ENCODE measurements at regions of chr11 and their contacts with region 1.

Region 1: DNA sequence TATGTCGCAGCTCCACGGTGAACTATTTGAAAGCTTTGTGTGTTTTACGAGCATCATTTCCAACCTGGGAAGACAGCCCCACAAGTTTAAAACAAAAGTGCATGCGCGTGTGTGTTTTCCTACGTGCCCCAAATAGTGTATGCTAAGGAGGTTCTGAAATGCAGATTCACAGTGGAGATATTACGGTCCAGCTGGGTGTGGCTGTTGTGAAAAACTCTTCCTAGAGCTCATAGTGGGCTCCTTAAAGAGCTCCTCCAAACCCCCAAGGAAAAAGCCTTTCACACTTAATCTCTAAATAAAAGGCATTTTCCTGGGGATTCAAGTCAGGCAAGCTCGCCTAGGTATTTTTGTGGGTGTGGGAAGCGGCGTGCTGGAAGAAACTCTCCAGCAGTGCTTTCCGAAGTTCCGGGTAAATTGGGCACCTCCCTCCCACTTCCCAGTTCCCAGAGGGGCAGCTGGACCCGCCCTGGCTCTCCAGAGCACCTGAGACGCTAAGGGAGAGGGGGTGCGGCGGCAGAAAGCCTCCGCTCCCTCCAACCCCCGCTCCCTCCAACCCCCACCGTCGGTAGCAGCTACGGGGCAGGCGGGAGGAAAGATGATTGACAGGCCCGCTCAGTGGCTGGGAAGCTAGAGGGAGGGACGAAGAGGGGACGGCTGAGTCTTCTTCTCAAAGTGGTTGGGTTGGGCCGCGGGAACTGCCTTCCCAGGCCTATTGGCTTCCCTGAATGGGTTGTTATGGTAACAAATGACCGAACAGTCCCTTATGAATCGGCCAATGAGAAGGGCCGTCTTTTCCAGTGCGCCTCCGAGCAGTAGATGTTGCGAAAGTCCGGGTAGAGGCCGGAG is 558 bp upstream of the PCF11 start:
- DNase-seq: peak; percentile 94 to 100 (median 97)
- ATAC-seq: peak; percentile 83
- H3K4me3 ChIP-seq: peak overlapping the region; percentile 89 to 98
- H3K4me3 Mint-ChIP-seq: peak overlapping the region; percentile 100
- H3K27ac ChIP-seq: peak overlapping the region; percentile 97
- H3K27ac Mint-ChIP-seq: peak overlapping the region; percentile 100
- H3K4me1 ChIP-seq: peaks cover 13% of the 10 kb centered on the region
- H3K4me1 Mint-ChIP-seq: peaks cover 28% of the 10 kb centered on the region
- H3K27me3 ChIP-seq: no peaks in the 10 kb centered on the region
- H3K27me3 Mint-ChIP-seq: no peaks in the 10 kb centered on the region
- CTCF ChIP-seq: no peak

Region 2: GRCh38 chr11:82663535-82663934 is 492.8 kb before region 1 on chr11:
- CTCF ChIA-PET with region 1: no interaction called
- POLR2A ChIA-PET with region 1: no interaction called
- intact Hi-C with region 1: no loop called
- DNase-seq: no peak
- ATAC-seq: no peak
- H3K4me3 ChIP-seq: no peak overlapping the region
- H3K4me3 Mint-ChIP-seq: no peak overlapping the region
- H3K27ac ChIP-seq: no peak overlapping the region
- H3K27ac Mint-ChIP-seq: no peak overlapping the region
- H3K4me1 ChIP-seq: no peaks in the 10 kb centered on the region
- H3K4me1 Mint-ChIP-seq: no peaks in the 10 kb centered on the region
- H3K27me3 ChIP-seq: no peaks in the 10 kb centered on the region
- H3K27me3 Mint-ChIP-seq: peaks cover under 1% of the 10 kb centered on the region
- CTCF ChIP-seq: no peak

Region 3: GRCh38 chr11:82959987-82960778 is 196.2 kb before region 1 on chr11:
- CTCF ChIA-PET with region 1: interaction called, 5 read pairs
- POLR2A ChIA-PET with region 1: interaction called, 24 read pairs
- intact Hi-C with region 1: loop called (anchors 1 kb)
- DNase-seq: peak in 7 of 9 experiments; percentile 25 to 89 (median 42)
- ATAC-seq: peak; percentile 78
- H3K4me3 ChIP-seq: peak overlapping the region; percentile 23 to 38
- H3K4me3 Mint-ChIP-seq: peak overlapping the region; percentile 55
- H3K27ac ChIP-seq: peak overlapping the region; percentile 79 to 89
- H3K27ac Mint-ChIP-seq: peak overlapping the region; percentile 98
- H3K4me1 ChIP-seq: peaks cover 92% of the 10 kb centered on the region
- H3K4me1 Mint-ChIP-seq: peaks cover 87% of the 10 kb centered on the region
- H3K27me3 ChIP-seq: no peaks in the 10 kb centered on the region
- H3K27me3 Mint-ChIP-seq: no peaks in the 10 kb centered on the region
- CTCF ChIP-seq: no peak

Region 4: DNA sequence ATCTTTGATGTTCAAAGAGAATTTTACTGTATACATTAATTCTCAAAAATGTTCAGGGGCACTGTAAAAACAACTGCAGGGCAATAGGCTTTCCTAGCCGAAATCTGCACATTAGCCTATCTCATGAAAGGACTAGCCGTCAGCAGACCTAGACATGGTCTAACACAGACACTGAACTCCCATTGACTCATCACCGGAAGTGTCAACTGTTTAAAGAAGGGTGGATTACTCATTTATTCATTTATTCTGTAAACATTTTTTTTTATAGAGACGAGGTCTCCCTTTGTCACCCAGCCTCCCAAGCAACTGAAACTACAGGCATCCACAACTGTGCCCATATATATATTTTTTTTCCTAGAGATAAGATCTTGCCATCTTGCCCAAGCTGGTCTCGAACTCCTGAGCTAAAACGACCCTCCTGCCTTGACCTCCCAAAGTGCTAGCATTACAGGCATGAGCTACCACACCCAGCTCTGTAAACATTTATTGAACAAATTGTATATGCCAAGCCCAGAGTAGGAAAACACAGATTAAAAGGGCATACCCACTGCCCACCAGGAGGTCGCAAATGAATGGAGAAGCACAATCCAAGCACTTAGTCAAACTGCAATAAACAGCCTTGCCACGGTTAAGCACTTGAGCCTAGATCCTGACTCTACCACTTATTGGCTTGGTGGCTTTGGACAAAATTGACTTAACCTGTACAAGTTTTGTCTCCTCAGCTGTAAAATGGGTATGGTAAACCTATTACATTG is 111.2 kb before region 1 on chr11:
- CTCF ChIA-PET with region 1: no interaction called
- POLR2A ChIA-PET with region 1: no interaction called
- intact Hi-C with region 1: no loop called
- DNase-seq: peak in 3 of 9 experiments; percentile 26 to 59 (median 57)
- ATAC-seq: peak; percentile 87
- H3K4me3 ChIP-seq: no peak overlapping the region
- H3K4me3 Mint-ChIP-seq: no peak overlapping the region
- H3K27ac ChIP-seq: no peak overlapping the region
- H3K27ac Mint-ChIP-seq: peak overlapping the region; percentile 70
- H3K4me1 ChIP-seq: peaks cover 3% of the 10 kb centered on the region
- H3K4me1 Mint-ChIP-seq: peaks cover 55% of the 10 kb centered on the region
- H3K27me3 ChIP-seq: no peaks in the 10 kb centered on the region
- H3K27me3 Mint-ChIP-seq: no peaks in the 10 kb centered on the region
- CTCF ChIP-seq: no peak

Region 5: DNA sequence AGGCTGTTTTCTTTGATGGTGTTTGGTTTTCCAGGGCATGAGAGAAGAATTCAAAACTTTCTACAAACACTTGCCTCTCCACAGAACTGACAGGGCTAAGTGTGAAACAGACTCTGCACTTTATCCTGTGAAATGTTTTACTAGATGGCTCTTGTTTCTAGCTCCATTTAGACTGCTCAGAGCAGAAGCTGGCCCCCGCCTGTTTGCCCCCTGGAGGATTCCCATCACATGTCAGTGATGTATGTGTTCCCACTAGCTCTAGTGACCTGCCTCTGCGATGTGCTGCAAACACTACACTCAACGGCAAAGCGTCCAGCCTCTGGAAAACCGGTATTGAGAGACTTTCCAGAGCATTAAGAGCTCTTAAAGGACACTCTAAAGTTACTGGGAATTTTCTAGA is 40.8 kb before region 1 on chr11:
- CTCF ChIA-PET with region 1: interaction called, 3 read pairs
- POLR2A ChIA-PET with region 1: interaction called, 47 read pairs
- intact Hi-C with region 1: loop called (anchors 1 kb)
- DNase-seq: no peak
- ATAC-seq: no peak
- H3K4me3 ChIP-seq: peak overlapping the region in 1 of 2 experiments; percentile 15
- H3K4me3 Mint-ChIP-seq: peak overlapping the region; percentile 74
- H3K27ac ChIP-seq: no peak overlapping the region
- H3K27ac Mint-ChIP-seq: no peak overlapping the region
- H3K4me1 ChIP-seq: peaks cover 44% of the 10 kb centered on the region
- H3K4me1 Mint-ChIP-seq: peaks cover 55% of the 10 kb centered on the region
- H3K27me3 ChIP-seq: no peaks in the 10 kb centered on the region
- H3K27me3 Mint-ChIP-seq: no peaks in the 10 kb centered on the region
- CTCF ChIP-seq: no peak

Region 6: DNA sequence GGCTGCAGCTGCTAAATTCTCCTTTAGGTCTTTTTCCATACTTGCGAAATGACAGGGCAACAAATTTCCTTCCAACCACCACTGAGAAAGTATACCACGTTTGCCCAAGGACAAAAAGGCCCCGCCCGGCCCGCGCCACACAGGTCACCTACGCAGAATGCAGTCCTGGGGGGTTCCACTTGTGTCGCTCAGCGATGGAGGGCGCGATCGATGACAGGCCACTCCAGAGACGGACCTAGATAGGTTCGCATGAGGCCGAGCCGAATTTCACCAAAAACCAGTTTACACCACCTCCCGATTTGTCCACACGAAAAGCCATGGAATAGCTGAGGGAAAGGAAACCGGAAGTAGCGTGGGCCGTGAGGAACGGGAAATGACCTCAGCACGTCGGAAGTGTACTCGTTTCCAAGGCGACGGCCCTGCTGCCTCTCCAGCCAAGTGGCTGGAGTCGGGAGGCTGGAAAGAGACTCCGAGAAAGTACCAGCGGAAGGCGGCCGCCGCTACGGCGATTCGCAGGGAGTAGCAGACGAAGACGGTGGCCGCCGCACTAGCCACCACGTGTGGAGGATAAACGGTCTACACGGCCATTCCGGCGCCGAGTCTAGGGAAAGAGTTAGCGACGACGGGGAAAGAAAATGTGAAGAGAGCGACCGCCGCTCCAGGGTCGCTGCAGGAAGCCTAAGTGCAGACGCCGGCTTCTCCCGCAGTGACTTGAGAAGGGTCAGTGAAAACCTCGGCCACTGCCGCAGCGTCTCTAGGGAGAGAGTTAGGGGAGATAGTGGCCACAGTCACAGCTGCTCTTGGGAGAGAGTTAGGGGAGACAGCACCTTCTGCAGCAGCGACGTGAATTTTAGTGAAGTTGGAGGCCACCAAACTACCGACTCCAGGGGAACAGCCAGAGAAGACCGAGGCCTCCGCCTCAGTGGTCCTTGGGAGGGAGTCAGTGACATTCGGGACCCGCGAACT is 37.2 kb after region 1 on chr11 and contains the start of gene ANKRD42:
- CTCF ChIA-PET with region 1: interaction called, 3 read pairs
- POLR2A ChIA-PET with region 1: interaction called, 29 read pairs
- intact Hi-C with region 1: loop called (anchors 1 kb)
- DNase-seq: peak; percentile 53 to 96 (median 86)
- ATAC-seq: peak; percentile 67
- H3K4me3 ChIP-seq: peak within 1 kb of the TSS; percentile 70 to 94
- H3K4me3 Mint-ChIP-seq: peak within 1 kb of the TSS; percentile 100
- H3K27ac ChIP-seq: peak within 1 kb of the TSS; percentile 97 to 98
- H3K27ac Mint-ChIP-seq: peak within 1 kb of the TSS; percentile 100
- H3K4me1 ChIP-seq: peaks cover 30% of the 10 kb centered on the region
- H3K4me1 Mint-ChIP-seq: peaks cover 50% of the 10 kb centered on the region
- H3K27me3 ChIP-seq: no peaks in the 10 kb centered on the region
- H3K27me3 Mint-ChIP-seq: no peaks in the 10 kb centered on the region
- CTCF ChIP-seq: no peak
- total RNA-seq, gene ANKRD42: 11.4 to 12.7 TPM